ENCODE measurements at regions of chr16 and their contacts with region 1.

Region 1: GRCh38 chr16:67084345-67085028 is 25.3 kb upstream of the PHAF1 start:
- DNase-seq: no peak
- ATAC-seq: no peak
- H3K4me3 ChIP-seq: no peak overlapping the region
- H3K27ac ChIP-seq: no peak overlapping the region
- H3K4me1 ChIP-seq: peaks cover 0 to 7% (median 0%) of the 10 kb centered on the region in 9 donors
- H3K27me3 ChIP-seq: no peaks in the 10 kb centered on the region
- CTCF ChIP-seq: no peak

Region 2: GRCh38 chr16:66787427-66787826 is 297.1 kb before region 1 on chr16:
- intact Hi-C with region 1: no loop called
- DNase-seq: no peak
- ATAC-seq: no peak
- H3K4me3 ChIP-seq: no peak overlapping the region
- H3K27ac ChIP-seq: no peak overlapping the region
- H3K4me1 ChIP-seq: no peaks in the 10 kb centered on the region
- H3K27me3 ChIP-seq: peaks cover 0 to 3% (median 0%) of the 10 kb centered on the region in 7 donors
- CTCF ChIP-seq: no peak

Region 3: GRCh38 chr16:67028555-67029248 is 55.8 kb before region 1 on chr16 and contains the start of gene CBFB:
- intact Hi-C with region 1: loop called in 1 of 10 experiments (anchors 10 kb)
- DNase-seq: peak; percentile 91 to 94
- ATAC-seq: peak; percentile 90 to 95 (median 94)
- H3K4me3 ChIP-seq: peak within 1 kb of the TSS; percentile 85 to 99 (median 96)
- H3K27ac ChIP-seq: peak within 1 kb of the TSS; percentile 93 to 100 (median 99)
- H3K4me1 ChIP-seq: peaks cover 3 to 39% (median 26%) of the 10 kb centered on the region in 9 donors
- H3K27me3 ChIP-seq: no peaks in the 10 kb centered on the region
- CTCF ChIP-seq: no peak
- total RNA-seq, gene CBFB: 22.2 to 36.4 (median 29.8) TPM

Region 4: DNA sequence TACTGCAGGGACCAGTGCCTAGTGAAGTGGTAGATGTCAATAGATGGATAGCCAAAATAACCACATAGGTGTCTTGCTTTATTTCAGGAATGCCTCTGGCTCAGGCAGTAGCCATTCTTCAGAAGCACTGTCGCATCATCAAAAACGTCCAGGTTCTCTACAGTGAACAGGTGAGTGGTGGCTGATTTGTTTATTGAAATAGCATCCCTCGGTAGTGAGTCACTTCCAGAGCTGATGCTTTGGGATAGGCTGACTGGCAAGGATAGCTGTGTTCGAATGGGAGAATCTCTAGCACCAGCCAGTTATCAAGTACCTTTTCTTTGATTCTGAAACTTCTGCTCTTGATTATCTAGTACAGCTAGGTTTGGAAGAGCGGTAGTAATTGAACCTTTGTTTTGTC is 35.5 kb after region 1 on chr16:
- intact Hi-C with region 1: no loop called
- DNase-seq: no peak
- ATAC-seq: no peak
- H3K4me3 ChIP-seq: no peak overlapping the region
- H3K27ac ChIP-seq: no peak overlapping the region
- H3K4me1 ChIP-seq: peaks cover 0 to 19% (median 0%) of the 10 kb centered on the region in 9 donors
- H3K27me3 ChIP-seq: no peaks in the 10 kb centered on the region
- CTCF ChIP-seq: no peak